CD8-positive, alpha-beta T cell (primary cell): ENCODE measurements at regions of chr20 and their contacts with region 1.

Region 1: DNA sequence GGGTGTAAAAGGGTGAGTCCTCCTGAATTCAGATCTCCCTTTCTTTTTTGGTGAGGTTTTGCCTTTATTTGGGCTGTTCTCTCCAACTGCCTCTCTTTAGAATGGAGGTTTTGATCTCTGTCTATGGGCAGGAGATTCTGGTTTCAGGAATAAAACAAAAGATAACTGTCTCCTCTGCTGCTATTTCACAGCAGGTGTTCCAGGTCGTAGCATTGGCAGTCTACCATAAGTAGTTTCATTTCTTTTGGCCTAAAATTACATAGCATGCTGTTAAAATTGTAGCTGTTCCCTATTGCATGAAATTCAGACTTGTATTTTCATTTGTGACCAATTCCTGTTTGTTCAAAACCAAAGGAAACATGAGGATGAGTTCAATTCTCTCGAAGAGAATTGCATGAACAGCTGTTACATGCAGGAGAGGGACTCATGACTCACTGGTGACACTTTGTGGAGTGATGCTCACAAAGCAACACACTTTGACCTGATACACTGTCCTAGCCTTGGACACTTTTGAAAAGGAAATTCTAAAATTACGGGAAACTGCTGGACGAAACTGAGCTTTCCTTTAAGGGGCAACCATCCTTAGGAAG is 76.8 kb upstream of the SIRPG start:
- DNase-seq: peak in 6 of 9 experiments; percentile 7 to 74 (median 36)
- ATAC-seq: peak; percentile 63
- H3K4me3 ChIP-seq: no peak overlapping the region
- H3K4me3 Mint-ChIP-seq: no peak overlapping the region
- H3K27ac ChIP-seq: no peak overlapping the region
- H3K27ac Mint-ChIP-seq: peak overlapping the region; percentile 75
- H3K4me1 ChIP-seq: peaks cover 31% of the 10 kb centered on the region
- H3K4me1 Mint-ChIP-seq: peaks cover 4% of the 10 kb centered on the region
- H3K27me3 ChIP-seq: no peaks in the 10 kb centered on the region
- H3K27me3 Mint-ChIP-seq: no peaks in the 10 kb centered on the region
- CTCF ChIP-seq: peak; percentile 50

Region 2: GRCh38 chr20:1075616-1076015 is 658.7 kb before region 1 on chr20:
- CTCF ChIA-PET with region 1: no interaction called
- POLR2A ChIA-PET with region 1: no interaction called
- intact Hi-C with region 1: no loop called
- DNase-seq: no peak
- ATAC-seq: no peak
- H3K4me3 ChIP-seq: no peak overlapping the region
- H3K4me3 Mint-ChIP-seq: no peak overlapping the region
- H3K27ac ChIP-seq: no peak overlapping the region
- H3K27ac Mint-ChIP-seq: no peak overlapping the region
- H3K4me1 ChIP-seq: no peaks in the 10 kb centered on the region
- H3K4me1 Mint-ChIP-seq: no peaks in the 10 kb centered on the region
- H3K27me3 ChIP-seq: no peaks in the 10 kb centered on the region
- H3K27me3 Mint-ChIP-seq: peaks cover under 1% of the 10 kb centered on the region
- CTCF ChIP-seq: no peak

Region 3: GRCh38 chr20:1449370-1449769 is 285.0 kb before region 1 on chr20:
- CTCF ChIA-PET with region 1: no interaction called
- POLR2A ChIA-PET with region 1: no interaction called
- intact Hi-C with region 1: no loop called
- DNase-seq: peak in 1 of 9 experiments; percentile 5
- ATAC-seq: no peak
- H3K4me3 ChIP-seq: no peak overlapping the region
- H3K4me3 Mint-ChIP-seq: no peak overlapping the region
- H3K27ac ChIP-seq: no peak overlapping the region
- H3K27ac Mint-ChIP-seq: no peak overlapping the region
- H3K4me1 ChIP-seq: no peaks in the 10 kb centered on the region
- H3K4me1 Mint-ChIP-seq: no peaks in the 10 kb centered on the region
- H3K27me3 ChIP-seq: no peaks in the 10 kb centered on the region
- H3K27me3 Mint-ChIP-seq: no peaks in the 10 kb centered on the region
- CTCF ChIP-seq: no peak

Region 4: DNA sequence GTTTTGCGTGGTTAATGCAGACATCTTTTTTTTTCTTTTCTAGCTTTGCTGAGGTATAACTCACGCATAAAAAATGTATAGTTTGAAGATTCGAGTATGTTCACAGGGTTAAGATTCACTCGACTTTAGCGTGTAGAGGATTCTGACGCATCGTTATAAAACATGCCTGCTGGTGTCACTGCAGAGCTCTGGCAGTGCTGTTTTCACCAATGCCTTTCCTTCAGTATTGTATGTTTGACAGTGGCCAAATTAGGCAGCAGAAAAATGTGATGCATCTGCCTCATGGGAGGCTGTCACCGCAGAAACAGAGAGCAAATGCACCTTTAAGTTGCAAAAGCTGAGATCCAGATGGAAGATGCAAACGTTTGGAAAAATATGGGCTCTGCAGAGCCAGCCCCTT is 225.1 kb before region 1 on chr20:
- CTCF ChIA-PET with region 1: interaction called, 62 read pairs
- POLR2A ChIA-PET with region 1: no interaction called
- intact Hi-C with region 1: loop called (anchors 1 kb)
- DNase-seq: peak in 6 of 9 experiments; percentile 10 to 54 (median 31)
- ATAC-seq: peak; percentile 69
- H3K4me3 ChIP-seq: no peak overlapping the region
- H3K4me3 Mint-ChIP-seq: no peak overlapping the region
- H3K27ac ChIP-seq: no peak overlapping the region
- H3K27ac Mint-ChIP-seq: no peak overlapping the region
- H3K4me1 ChIP-seq: no peaks in the 10 kb centered on the region
- H3K4me1 Mint-ChIP-seq: peaks cover 2% of the 10 kb centered on the region
- H3K27me3 ChIP-seq: no peaks in the 10 kb centered on the region
- H3K27me3 Mint-ChIP-seq: peaks cover 4% of the 10 kb centered on the region
- CTCF ChIP-seq: peak; percentile 38

Region 5: GRCh38 chr20:1555952-1556351 is 178.4 kb before region 1 on chr20:
- CTCF ChIA-PET with region 1: interaction called, 52 read pairs
- POLR2A ChIA-PET with region 1: interaction called, 3 read pairs
- intact Hi-C with region 1: loop called in 1 of 2 experiments (anchors 1 kb)
- DNase-seq: peak in 2 of 9 experiments; percentile 50 to 62
- ATAC-seq: peak; percentile 49
- H3K4me3 ChIP-seq: no peak overlapping the region
- H3K4me3 Mint-ChIP-seq: no peak overlapping the region
- H3K27ac ChIP-seq: no peak overlapping the region
- H3K27ac Mint-ChIP-seq: no peak overlapping the region
- H3K4me1 ChIP-seq: no peaks in the 10 kb centered on the region
- H3K4me1 Mint-ChIP-seq: peaks cover 8% of the 10 kb centered on the region
- H3K27me3 ChIP-seq: no peaks in the 10 kb centered on the region
- H3K27me3 Mint-ChIP-seq: no peaks in the 10 kb centered on the region
- CTCF ChIP-seq: peak; percentile 22

Region 6: DNA sequence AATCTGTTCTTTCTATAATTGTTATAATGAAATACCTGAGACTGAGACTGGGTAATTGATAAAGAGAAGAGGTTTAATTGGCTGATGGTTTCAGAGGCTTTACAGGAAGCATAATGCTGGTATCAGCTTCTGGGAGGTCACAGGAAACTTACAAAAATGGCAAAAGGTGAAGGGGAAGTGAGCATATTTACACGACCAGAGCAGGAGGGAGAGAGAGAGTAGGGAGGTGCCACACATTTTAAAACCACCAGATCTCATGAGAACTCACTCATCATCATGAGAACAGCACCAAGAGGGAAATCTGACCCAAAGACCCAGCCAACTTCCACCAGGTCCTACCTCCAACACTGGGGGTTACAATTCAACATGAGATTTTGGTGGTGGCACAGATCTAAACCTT is 111.9 kb before region 1 on chr20:
- CTCF ChIA-PET with region 1: interaction called, 8 read pairs
- POLR2A ChIA-PET with region 1: interaction called, 3 read pairs
- intact Hi-C with region 1: loop called in 1 of 2 experiments (anchors 1 kb)
- DNase-seq: peak in 2 of 9 experiments; percentile 34 to 57
- ATAC-seq: peak; percentile 44
- H3K4me3 ChIP-seq: no peak overlapping the region
- H3K4me3 Mint-ChIP-seq: no peak overlapping the region
- H3K27ac ChIP-seq: peak overlapping the region in 1 of 2 experiments; percentile 66
- H3K27ac Mint-ChIP-seq: peak overlapping the region; percentile 89
- H3K4me1 ChIP-seq: peaks cover 55% of the 10 kb centered on the region
- H3K4me1 Mint-ChIP-seq: peaks cover 78% of the 10 kb centered on the region
- H3K27me3 ChIP-seq: no peaks in the 10 kb centered on the region
- H3K27me3 Mint-ChIP-seq: no peaks in the 10 kb centered on the region
- CTCF ChIP-seq: no peak

Region 7: DNA sequence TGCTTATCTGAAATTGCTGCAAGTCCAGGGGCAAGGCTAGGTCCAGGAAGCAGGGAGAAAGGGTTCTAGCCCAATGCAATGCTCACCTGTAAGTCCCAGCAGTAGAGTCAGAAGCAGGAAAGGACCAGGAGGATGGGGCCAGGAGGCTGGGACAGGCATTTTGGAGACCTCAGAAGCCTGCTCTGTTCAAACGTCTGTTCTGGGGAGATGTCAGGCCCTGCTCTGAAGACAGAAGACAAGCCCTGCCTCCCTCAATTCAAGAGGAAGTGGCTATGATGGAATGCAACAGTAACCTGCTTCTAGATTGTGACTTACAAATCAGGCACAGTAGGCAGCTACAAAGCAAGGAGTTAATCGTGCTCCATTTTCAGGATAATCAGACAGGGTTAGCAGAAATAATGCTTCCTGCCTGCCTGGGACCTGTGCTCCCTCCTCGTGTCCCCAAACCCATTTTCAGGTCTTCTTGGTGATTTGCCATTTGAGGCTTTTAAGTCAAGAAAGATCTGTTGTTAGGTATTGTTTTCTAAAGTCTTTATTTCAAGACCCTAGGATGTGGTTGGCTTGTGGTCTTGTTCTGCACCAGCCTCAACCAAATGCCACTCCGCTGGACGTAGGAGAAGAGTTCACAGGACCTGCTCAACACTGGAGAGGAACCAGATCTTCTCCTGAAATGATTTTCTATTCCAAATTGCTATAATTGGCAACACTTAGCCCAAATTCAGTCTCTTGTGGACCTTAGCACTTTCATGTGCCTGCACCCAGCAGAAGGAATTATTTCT is 76.6 kb before region 1 on chr20 and contains the start of gene SIRPG:
- CTCF ChIA-PET with region 1: interaction called, 9 read pairs
- POLR2A ChIA-PET with region 1: no interaction called
- intact Hi-C with region 1: loop called in 1 of 2 experiments (anchors 5 kb)
- DNase-seq: peak in 3 of 9 experiments; percentile 31 to 60 (median 40)
- ATAC-seq: peak; percentile 51
- H3K4me3 ChIP-seq: peak within 1 kb of the TSS; percentile 52 to 59
- H3K4me3 Mint-ChIP-seq: peak within 1 kb of the TSS; percentile 89
- H3K27ac ChIP-seq: peak within 1 kb of the TSS; percentile 39 to 68
- H3K27ac Mint-ChIP-seq: peak within 1 kb of the TSS; percentile 96
- H3K4me1 ChIP-seq: peaks cover 87% of the 10 kb centered on the region
- H3K4me1 Mint-ChIP-seq: peaks cover 88% of the 10 kb centered on the region
- H3K27me3 ChIP-seq: no peaks in the 10 kb centered on the region
- H3K27me3 Mint-ChIP-seq: no peaks in the 10 kb centered on the region
- CTCF ChIP-seq: no peak
- total RNA-seq, gene SIRPG: 17.1 to 17.6 TPM

Region 8: DNA sequence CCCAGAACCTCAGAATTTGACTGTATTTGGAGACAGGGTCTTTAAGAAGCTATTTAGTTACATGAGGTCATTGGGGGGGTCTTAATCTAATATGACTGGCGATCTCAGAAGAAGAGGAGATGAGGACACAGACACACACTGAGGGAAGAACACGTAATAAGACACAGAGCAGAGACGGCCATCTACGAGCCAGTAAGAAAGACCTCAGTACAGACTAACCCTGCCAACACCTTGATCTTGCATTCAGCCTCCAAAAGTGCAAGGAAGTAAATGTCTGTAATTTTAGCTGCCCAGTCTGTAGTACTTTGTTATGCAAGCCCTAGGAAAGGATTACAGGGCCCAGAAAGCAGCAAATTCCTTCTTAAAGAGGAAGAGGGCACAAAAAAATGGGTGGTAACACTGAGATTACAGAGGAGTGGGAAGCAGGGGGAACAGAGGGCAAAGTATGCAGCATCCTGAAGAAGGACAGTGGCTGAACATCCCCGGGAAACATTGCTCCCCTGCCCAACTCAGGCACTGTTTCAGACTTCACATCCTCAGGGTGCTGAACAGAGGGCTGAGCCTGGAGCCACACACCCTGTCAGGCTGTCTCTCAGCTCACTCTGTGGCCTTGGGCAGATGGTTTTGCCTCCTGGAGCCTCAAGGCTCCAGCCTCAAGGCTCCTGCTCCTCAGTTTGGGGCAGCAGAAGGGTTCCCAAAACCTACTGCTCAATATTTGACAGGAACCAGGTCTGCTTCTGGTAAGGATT is 48.9 kb before region 1 on chr20:
- CTCF ChIA-PET with region 1: interaction called, 4 read pairs
- POLR2A ChIA-PET with region 1: interaction called, 3 read pairs
- intact Hi-C with region 1: loop called in 1 of 2 experiments (anchors 5 kb)
- DNase-seq: no peak
- ATAC-seq: peak; percentile 50
- H3K4me3 ChIP-seq: peak overlapping the region; percentile 49 to 61
- H3K4me3 Mint-ChIP-seq: peak overlapping the region; percentile 87
- H3K27ac ChIP-seq: peak overlapping the region; percentile 39 to 62
- H3K27ac Mint-ChIP-seq: peak overlapping the region; percentile 92
- H3K4me1 ChIP-seq: peaks cover 26% of the 10 kb centered on the region
- H3K4me1 Mint-ChIP-seq: peaks cover 68% of the 10 kb centered on the region
- H3K27me3 ChIP-seq: no peaks in the 10 kb centered on the region
- H3K27me3 Mint-ChIP-seq: no peaks in the 10 kb centered on the region
- CTCF ChIP-seq: no peak

Region 9: GRCh38 chr20:1776681-1777475 is 42.5 kb after region 1 on chr20:
- CTCF ChIA-PET with region 1: interaction called, 14 read pairs
- POLR2A ChIA-PET with region 1: no interaction called
- intact Hi-C with region 1: loop called in 1 of 2 experiments (anchors 2 kb)
- DNase-seq: peak; percentile 69 to 91 (median 84)
- ATAC-seq: peak; percentile 94
- H3K4me3 ChIP-seq: peak overlapping the region; percentile 61 to 68
- H3K4me3 Mint-ChIP-seq: peak overlapping the region; percentile 84
- H3K27ac ChIP-seq: peak overlapping the region in 1 of 2 experiments; percentile 18
- H3K27ac Mint-ChIP-seq: peak overlapping the region; percentile 56
- H3K4me1 ChIP-seq: peaks cover 7% of the 10 kb centered on the region
- H3K4me1 Mint-ChIP-seq: peaks cover 16% of the 10 kb centered on the region
- H3K27me3 ChIP-seq: no peaks in the 10 kb centered on the region
- H3K27me3 Mint-ChIP-seq: peaks cover 13% of the 10 kb centered on the region
- CTCF ChIP-seq: peak; percentile 78

Region 10: GRCh38 chr20:1860446-1860845 is 126.1 kb after region 1 on chr20:
- CTCF ChIA-PET with region 1: no interaction called
- POLR2A ChIA-PET with region 1: no interaction called
- intact Hi-C with region 1: no loop called
- DNase-seq: no peak
- ATAC-seq: no peak
- H3K4me3 ChIP-seq: no peak overlapping the region
- H3K4me3 Mint-ChIP-seq: no peak overlapping the region
- H3K27ac ChIP-seq: no peak overlapping the region
- H3K27ac Mint-ChIP-seq: no peak overlapping the region
- H3K4me1 ChIP-seq: no peaks in the 10 kb centered on the region
- H3K4me1 Mint-ChIP-seq: no peaks in the 10 kb centered on the region
- H3K27me3 ChIP-seq: no peaks in the 10 kb centered on the region
- H3K27me3 Mint-ChIP-seq: peaks cover 16% of the 10 kb centered on the region
- CTCF ChIP-seq: no peak